A549 (cell line): ENCODE measurements at regions of chr16 and their contacts with region 1.

Region 1: GRCh38 chr16:8915722-8916301 is 33.7 kb downstream of the LITAFD start:
- DNase-seq: no peak
- ATAC-seq: no peak
- H3K4me3 ChIP-seq: no peak overlapping the region
- H3K27ac ChIP-seq: no peak overlapping the region
- H3K4me1 ChIP-seq: no peaks in the 10 kb centered on the region
- CTCF ChIP-seq: no peak
- EP300 ChIP-seq: no peak
- POLR2A ChIP-seq: no peak
- RAD21 ChIP-seq: no peak

Region 2: DNA sequence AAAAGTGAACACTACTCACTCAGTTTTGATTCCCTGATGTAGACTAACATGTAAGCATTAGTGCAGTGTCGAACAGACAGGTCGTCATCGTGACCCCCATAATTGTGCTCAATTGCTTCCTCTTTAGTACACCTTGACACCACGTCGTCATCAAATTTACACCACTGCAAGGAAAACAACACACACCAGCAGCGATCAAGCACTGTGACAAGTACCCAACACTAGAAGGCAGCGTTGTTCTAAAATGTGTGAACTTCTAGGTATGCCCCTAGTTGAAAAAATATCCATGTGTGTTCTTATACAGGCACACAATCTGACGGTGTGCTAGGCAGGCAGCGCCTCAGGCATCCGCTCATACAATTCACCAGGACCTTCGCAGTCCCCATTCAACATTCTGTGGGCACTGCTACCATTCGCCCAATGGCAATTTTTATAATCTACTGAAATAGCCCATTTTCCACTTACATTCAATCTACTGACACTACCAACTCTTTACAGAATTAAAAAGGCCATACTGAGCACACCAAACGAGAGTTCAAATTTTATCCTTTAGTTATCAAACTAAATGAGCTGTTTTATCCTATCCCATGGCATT is 10.5 kb before region 1 on chr16:
- CTCF ChIA-PET with region 1: interaction called, 11 read pairs
- POLR2A ChIA-PET with region 1: no interaction called
- DNase-seq: peak; percentile 36 to 69
- ATAC-seq: peak; percentile 87 to 89
- H3K4me3 ChIP-seq: no peak overlapping the region
- H3K27ac ChIP-seq: no peak overlapping the region
- H3K4me1 ChIP-seq: peaks cover 6% of the 10 kb centered on the region; the same call in 1 of the 3 replicates
- CTCF ChIP-seq: peak; percentile 27
- EP300 ChIP-seq: no peak
- POLR2A ChIP-seq: no peak
- RAD21 ChIP-seq: peak; percentile 57 to 73